Activated CD4-positive, alpha-beta memory T cell treated with anti-CD3 and anti-CD28 coated beads for 36 hours (primary cell): ENCODE measurements at regions of chr6 and their contacts with region 1.

Region 1: DNA sequence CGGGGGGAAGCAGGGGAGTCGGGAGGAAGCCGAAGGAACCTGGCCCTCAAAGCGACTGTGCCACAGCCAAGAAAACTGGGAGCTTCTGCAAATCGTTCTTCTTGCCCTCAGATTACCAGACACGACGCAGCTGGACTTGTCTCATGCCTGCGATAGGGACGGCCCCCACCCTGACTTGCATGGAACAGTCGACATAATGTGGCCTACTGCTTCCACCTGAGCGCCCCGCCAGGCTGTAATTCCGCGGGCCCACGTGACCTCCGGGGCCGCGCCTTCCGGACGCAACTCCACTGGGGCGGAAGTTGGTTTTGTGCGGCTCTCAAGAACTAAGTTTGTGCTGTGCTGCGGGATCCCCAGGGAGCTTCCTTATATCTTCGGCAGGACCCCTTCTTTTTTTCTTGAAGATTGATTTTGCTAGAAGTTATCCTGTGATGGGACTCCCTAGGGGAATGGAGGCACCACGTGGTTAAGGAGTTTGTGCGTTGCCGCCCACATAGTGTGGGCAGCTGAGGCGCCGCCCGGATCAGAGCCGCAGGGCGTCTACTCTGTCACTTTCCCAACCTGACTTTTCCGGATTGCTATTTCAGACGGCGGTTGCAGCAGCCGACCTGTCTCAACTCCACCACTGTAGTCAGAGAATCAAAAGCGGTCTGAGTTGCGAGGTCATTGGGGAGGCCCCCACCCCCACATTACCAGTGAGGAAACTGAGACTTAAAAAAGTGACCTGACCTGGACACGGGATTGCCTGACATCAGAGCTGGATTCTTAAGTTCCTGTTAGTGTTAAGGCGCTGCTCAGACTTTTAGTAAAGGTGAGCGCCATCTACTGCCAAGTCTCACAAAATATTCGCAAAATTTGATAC is 540 bp upstream of the CD164 start:
- DNase-seq: peak; percentile 94
- H3K4me3 Mint-ChIP-seq: peak overlapping the region; percentile 95
- H3K27ac Mint-ChIP-seq: peak overlapping the region; percentile 99
- H3K4me1 Mint-ChIP-seq: peaks cover 35% of the 10 kb centered on the region
- H3K27me3 Mint-ChIP-seq: no peaks in the 10 kb centered on the region

Region 2: DNA sequence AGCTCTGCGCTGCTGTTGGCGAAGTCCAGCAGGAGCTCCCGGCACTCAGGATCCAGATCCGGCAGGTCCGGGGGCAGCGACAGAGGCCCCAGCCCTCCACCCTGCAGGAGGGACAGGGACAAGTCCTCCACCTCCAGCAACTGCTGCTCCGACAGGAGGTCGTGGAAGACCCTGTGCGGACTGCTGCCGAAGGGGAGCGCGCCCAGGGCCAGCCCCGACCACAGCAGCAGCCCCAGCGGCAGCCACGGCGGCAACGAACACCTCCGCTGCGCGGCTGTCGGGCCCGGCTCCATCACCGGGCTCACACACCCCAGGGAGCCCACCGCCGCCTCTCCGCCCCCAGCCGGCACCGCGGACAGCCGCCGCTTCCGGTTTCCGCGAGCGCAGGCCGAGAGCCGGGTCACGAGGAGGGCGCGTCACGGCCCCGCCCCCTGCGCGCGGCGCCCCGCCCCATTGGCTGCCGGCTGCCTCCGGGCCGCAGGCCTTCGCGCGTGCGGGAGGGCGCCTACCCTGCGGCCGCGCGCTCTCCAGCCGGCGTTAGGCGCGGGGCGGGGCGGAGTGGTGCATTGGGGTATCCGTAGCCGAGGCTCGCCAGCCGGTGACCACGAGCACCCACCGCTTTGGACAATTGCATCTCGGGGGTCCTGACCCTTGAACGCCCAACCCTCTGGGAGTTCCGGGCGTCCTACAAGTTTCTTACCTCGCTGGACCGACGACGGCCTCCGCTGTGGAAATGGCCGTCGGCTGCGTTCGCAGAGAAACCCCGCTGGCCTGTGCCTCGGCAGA is 1308.3 kb before region 1 on chr6 and contains the start of gene OSTM1:
- CTCF ChIA-PET with region 1: no interaction called
- POLR2A ChIA-PET with region 1: no interaction called
- intact Hi-C with region 1: loop called (anchors 5 kb)
- DNase-seq: peak; percentile 95
- H3K4me3 Mint-ChIP-seq: peak within 1 kb of the TSS; percentile 80
- H3K27ac Mint-ChIP-seq: peak within 1 kb of the TSS; percentile 65
- H3K4me1 Mint-ChIP-seq: peaks cover 24% of the 10 kb centered on the region
- H3K27me3 Mint-ChIP-seq: no peaks in the 10 kb centered on the region
- total RNA-seq, gene OSTM1: 14.0 to 16.3 TPM

Region 3: GRCh38 chr6:108874470-108875160 is 508.2 kb before region 1 on chr6:
- CTCF ChIA-PET with region 1: no interaction called
- POLR2A ChIA-PET with region 1: no interaction called
- intact Hi-C with region 1: no loop called
- DNase-seq: peak; percentile 73
- H3K4me3 Mint-ChIP-seq: peak overlapping the region; percentile 65
- H3K27ac Mint-ChIP-seq: peak overlapping the region; percentile 91
- H3K4me1 Mint-ChIP-seq: peaks cover 46% of the 10 kb centered on the region
- H3K27me3 Mint-ChIP-seq: peaks cover 2% of the 10 kb centered on the region

Region 4: GRCh38 chr6:109050012-109050411 is 332.8 kb before region 1 on chr6:
- CTCF ChIA-PET with region 1: no interaction called
- POLR2A ChIA-PET with region 1: no interaction called
- intact Hi-C with region 1: no loop called
- DNase-seq: no peak
- H3K4me3 Mint-ChIP-seq: no peak overlapping the region
- H3K27ac Mint-ChIP-seq: no peak overlapping the region
- H3K4me1 Mint-ChIP-seq: peaks cover 21% of the 10 kb centered on the region
- H3K27me3 Mint-ChIP-seq: no peaks in the 10 kb centered on the region

Region 5: DNA sequence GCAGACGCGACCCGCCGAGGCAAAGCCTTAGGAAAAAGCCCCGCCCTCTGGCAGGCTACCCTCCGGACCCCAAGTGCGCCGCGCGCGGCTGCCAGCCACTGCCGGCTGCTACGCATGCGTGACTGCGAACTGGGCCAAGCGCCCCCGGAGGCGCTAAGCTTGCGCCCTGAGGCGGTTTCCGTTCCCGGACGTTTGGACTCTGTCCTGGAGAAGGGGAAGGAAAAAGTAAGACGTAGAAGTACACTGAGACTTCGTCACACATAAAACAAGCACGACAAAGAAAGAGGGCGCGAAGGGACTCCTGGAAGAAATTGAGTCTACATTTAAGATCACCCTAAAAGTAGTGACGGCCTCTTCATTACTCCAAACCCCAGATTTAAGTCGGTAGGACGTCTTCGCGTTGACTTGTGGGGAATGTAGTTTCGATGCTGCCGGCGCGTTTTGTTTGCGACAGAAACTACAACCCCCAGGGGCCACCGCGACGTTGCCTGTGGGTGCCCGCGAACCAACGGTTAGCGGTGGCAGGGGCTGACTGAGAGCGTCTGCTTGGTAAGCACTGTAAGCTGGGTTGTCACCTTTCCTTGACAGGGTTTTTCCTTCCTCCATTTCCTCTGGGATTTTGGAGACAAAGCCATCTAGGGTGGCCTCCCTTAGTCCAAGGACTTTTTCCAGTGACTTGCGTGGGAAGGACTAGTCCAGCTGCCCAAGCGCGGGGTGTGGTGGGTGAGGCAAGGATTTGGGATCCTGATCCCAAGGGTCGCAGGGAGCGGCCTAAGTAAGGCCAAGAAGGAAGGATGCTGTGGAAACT is 287.6 kb before region 1 on chr6 and contains the start of gene CEP57L1:
- CTCF ChIA-PET with region 1: interaction called, 11 read pairs
- POLR2A ChIA-PET with region 1: interaction called, 24 read pairs
- intact Hi-C with region 1: loop called (anchors 1 kb)
- DNase-seq: peak; percentile 97
- H3K4me3 Mint-ChIP-seq: peak within 1 kb of the TSS; percentile 96
- H3K27ac Mint-ChIP-seq: peak within 1 kb of the TSS; percentile 100
- H3K4me1 Mint-ChIP-seq: peaks cover 44% of the 10 kb centered on the region
- H3K27me3 Mint-ChIP-seq: no peaks in the 10 kb centered on the region
- total RNA-seq, gene CEP57L1: 23.0 to 27.8 TPM

Region 6: DNA sequence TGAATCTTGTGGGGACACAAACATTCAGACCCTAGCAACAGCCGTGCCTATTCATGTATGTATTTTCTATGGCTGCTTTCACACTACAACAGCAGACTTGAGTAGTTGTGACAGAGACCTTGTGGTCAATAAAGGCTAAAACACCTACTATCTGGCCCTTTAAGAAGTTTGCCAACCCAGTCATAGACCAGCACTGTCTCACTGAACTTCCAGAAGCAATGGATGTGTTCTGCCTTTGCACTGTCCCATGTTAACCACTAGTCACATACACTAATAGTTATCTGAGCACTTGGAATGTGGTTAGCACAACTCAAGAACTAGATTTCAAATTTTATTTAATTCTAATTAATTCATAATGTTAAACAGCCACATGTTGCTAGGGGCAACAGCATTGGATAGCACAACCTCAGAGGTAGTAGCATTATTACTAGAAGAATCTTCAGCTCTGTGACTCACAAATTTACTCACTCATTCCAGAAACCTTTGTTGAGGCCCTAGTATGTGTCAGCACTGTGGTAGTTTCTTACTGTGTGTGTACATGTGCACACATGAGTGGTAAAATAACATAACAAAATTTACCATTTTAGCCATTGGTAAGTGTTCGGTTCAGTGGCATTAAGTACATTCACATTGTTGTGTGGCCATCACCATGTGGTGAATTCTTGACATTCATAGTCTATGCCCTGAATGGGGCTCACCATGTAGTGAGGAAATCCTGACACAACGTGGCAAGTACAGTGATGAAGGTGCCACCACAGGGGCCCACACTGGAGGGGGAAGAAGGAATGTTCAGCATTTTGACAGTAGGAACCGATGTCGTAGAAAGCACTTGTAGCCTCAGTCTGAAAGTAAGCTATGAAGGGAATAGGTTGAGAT is 180.2 kb before region 1 on chr6:
- CTCF ChIA-PET with region 1: interaction called, 14 read pairs
- POLR2A ChIA-PET with region 1: interaction called, 8 read pairs
- intact Hi-C with region 1: loop called (anchors 1 kb)
- DNase-seq: peak; percentile 38
- H3K4me3 Mint-ChIP-seq: no peak overlapping the region
- H3K27ac Mint-ChIP-seq: peak overlapping the region; percentile 53
- H3K4me1 Mint-ChIP-seq: peaks cover 17% of the 10 kb centered on the region
- H3K27me3 Mint-ChIP-seq: no peaks in the 10 kb centered on the region

Region 7: DNA sequence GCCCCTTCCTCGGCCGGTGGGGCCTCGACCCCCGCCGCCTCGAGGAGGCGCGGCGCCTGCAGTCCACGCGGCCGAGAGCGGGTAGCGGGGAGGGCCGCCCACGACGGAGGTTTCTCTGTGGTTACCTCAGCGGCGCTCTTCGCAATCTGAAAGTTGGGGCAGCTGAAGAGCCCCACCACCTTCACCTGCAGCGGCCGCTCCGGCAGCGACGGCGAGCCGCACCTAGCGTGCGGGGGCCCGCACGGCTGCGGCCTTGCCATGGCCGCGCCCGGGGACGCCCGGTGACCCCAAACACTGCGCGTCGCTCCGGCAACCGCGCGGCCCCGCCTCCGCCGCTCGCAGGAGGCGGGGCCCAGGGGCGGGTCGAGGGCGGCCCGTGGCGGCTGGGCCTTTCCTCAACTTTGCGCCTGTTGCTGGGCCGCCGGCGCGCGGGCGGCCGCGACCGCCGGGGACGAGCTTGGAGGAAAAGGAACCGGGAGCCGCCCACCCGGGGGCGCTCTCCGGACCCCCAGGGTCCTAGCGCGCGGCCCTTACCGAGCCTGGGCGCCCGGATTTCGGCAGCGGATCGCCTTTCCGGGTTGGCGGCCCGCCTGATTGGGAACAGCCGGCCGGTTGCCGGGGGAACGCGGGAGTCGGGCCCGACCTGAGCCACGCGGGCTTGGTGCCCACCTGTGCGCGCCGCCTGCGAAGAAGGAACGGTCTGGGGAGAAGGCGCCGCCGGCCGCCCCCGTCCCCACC is 57.7 kb after region 1 on chr6 and contains the starts of genes PPIL6 and SMPD2:
- CTCF ChIA-PET with region 1: interaction called, 19 read pairs
- POLR2A ChIA-PET with region 1: interaction called, 25 read pairs
- intact Hi-C with region 1: loop called (anchors 1 kb)
- DNase-seq: peak; percentile 84
- H3K4me3 Mint-ChIP-seq: peak within 1 kb of the TSS; percentile 87
- H3K27ac Mint-ChIP-seq: peak within 1 kb of the TSS; percentile 82
- H3K4me1 Mint-ChIP-seq: peaks cover 21% of the 10 kb centered on the region
- H3K27me3 Mint-ChIP-seq: no peaks in the 10 kb centered on the region
- total RNA-seq, gene PPIL6: 0.43 to 0.46 TPM
- total RNA-seq, gene SMPD2: 9.7 TPM

Region 8: GRCh38 chr6:109690737-109691621 is 308.2 kb after region 1 on chr6 and contains the starts of genes AK9 and FIG4:
- CTCF ChIA-PET with region 1: interaction called, 5 read pairs
- POLR2A ChIA-PET with region 1: no interaction called
- intact Hi-C with region 1: loop called (anchors 2 kb)
- DNase-seq: peak; percentile 95
- H3K4me3 Mint-ChIP-seq: peak within 1 kb of the TSS; percentile 96
- H3K27ac Mint-ChIP-seq: peak within 1 kb of the TSS; percentile 89
- H3K4me1 Mint-ChIP-seq: peaks cover 30% of the 10 kb centered on the region
- H3K27me3 Mint-ChIP-seq: no peaks in the 10 kb centered on the region
- total RNA-seq, gene AK9: 2.2 to 2.8 TPM
- total RNA-seq, gene FIG4: 17.3 to 18.2 TPM